ENCODE measurements at regions of chr1 and their contacts with region 1.

Region 1: DNA sequence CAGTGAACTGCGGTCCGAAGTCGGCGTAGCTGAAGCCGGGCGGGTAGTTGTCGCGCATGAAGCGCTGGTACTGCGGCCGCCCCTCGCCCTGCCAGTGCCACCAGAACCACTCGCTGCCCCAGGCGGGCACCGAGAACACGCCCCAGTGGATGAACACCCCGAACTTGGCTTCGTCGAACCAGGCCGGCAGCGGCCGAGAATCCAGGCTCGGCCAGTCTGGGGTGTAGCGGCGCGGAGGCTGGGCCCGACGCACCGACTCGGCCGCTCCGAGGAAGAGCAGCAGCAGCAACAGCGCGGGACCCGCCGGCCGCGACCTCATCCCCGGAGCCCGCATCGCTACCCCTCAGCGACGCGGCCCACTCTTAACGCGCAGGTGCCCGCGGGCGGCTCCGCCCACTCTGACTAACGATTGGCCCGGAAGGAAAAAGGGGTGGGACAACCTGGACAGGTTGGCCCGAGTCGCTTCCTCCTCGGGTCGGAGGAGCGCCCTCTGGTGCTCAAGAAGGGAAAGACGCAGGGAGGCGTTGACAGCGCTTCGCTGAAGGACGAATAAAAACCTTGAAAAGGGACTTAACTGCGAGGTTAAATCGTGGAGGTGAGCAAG is at the start of gene FUCA1:
- DNase-seq: peak; percentile 95 to 98 (median 97)
- H3K4me3 ChIP-seq: peak within 1 kb of the TSS; percentile 63 to 87 (median 82)
- H3K27ac ChIP-seq: peak within 1 kb of the TSS in 1 of 2 experiments; percentile 55
- H3K4me1 ChIP-seq: peaks cover 15 to 44% (median 29%) of the 10 kb centered on the region in 4 experiments
- H3K27me3 ChIP-seq: no peaks in the 10 kb centered on the region

Region 2: DNA sequence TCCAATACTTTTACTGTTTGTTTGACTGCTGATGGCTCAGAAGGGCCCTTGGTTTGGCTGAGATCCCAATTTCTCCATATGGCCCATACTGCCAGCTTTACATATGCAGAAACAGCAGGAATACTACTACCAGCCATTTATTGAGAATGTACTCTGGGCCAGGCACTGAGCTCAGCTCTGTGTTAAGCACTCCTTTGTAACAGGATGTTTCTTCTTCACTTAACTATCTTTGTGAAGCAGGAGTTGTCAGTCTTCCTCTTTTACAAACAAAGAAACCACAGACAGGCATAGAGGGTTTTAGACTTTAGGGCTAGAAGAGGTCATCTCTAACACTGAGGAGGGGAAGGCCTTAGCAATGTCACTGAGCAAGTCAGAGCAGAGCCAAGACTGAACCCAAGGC is 51.1 kb before region 1 on chr1:
- CTCF ChIA-PET with region 1: interaction called, 68 read pairs
- POLR2A ChIA-PET with region 1: no interaction called
- DNase-seq: peak in 2 of 3 donors; percentile 46 to 71
- H3K4me3 ChIP-seq: no peak overlapping the region
- H3K27ac ChIP-seq: peak overlapping the region in 1 of 2 experiments; percentile 65
- H3K4me1 ChIP-seq: peaks cover 0 to 21% (median 18%) of the 10 kb centered on the region in 4 experiments
- H3K27me3 ChIP-seq: no peaks in the 10 kb centered on the region

Region 3: GRCh38 chr1:23838401-23838866 is 29.6 kb before region 1 on chr1:
- CTCF ChIA-PET with region 1: no interaction called
- POLR2A ChIA-PET with region 1: no interaction called
- DNase-seq: peak; percentile 90 to 96 (median 95)
- H3K4me3 ChIP-seq: peak overlapping the region in 6 of 7 experiments; percentile 1 to 75 (median 53)
- H3K27ac ChIP-seq: peak overlapping the region in 1 of 2 experiments; percentile 26
- H3K4me1 ChIP-seq: peaks cover 0 to 12% (median 7%) of the 10 kb centered on the region in 4 experiments
- H3K27me3 ChIP-seq: no peaks in the 10 kb centered on the region